Ovary (tissue), 10 donors: ENCODE measurements at regions of chr16 and their contacts with region 1.

Region 1: DNA sequence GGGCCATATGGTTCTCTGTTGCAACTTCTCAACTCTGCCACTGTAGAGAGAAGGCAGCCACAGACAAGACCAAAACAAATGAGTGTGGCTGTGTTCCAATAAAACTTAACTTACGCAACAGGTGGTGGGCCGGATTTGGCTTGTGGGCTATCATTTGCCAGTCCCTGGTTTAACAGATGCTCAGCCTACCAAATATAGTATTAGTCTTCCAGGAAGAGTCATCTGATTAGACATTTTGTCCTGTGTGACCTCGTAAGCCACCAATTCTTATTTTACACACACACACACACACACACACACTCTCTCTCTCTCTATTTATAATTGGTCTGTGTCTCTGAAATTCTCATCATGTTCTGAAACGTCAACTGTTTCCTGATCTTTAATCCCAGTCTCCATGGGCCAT is 245.9 kb downstream of the XYLT1 start:
- DNase-seq: peak; percentile 58 to 78 (median 62)
- H3K4me3 ChIP-seq: no peak overlapping the region
- H3K27ac ChIP-seq: peak overlapping the region in 1 of 2 donors; percentile 29
- H3K4me1 ChIP-seq: peaks cover 9% of the 10 kb centered on the region
- H3K27me3 ChIP-seq: no peaks in the 10 kb centered on the region
- CTCF ChIP-seq: no peak
- EP300 ChIP-seq: no peak
- POLR2A ChIP-seq: no peak

Region 2: DNA sequence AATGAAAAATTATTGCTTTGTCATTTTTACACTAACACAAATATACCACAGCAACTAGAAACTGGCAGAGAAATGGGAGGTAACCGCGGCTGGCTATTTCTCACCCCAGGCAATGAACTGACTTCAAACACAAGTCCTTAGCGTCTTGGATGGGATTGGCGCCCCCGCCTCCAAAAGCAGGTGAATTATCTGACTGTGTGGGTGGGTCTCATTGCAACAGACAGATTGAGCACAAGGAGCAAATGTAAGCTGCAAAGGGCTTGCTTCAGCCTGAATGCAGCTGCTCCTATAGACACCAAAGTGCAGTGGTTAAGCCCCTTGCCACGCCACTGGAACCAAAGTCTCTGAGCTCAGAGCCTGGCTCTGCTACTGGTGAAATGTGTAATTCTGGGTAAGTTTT is 20.9 kb after region 1 on chr16:
- intact Hi-C with region 1: no loop called
- DNase-seq: no peak
- H3K4me3 ChIP-seq: no peak overlapping the region
- H3K27ac ChIP-seq: no peak overlapping the region
- H3K4me1 ChIP-seq: no peaks in the 10 kb centered on the region
- H3K27me3 ChIP-seq: no peaks in the 10 kb centered on the region
- CTCF ChIP-seq: no peak
- EP300 ChIP-seq: no peak
- POLR2A ChIP-seq: no peak

Region 3: DNA sequence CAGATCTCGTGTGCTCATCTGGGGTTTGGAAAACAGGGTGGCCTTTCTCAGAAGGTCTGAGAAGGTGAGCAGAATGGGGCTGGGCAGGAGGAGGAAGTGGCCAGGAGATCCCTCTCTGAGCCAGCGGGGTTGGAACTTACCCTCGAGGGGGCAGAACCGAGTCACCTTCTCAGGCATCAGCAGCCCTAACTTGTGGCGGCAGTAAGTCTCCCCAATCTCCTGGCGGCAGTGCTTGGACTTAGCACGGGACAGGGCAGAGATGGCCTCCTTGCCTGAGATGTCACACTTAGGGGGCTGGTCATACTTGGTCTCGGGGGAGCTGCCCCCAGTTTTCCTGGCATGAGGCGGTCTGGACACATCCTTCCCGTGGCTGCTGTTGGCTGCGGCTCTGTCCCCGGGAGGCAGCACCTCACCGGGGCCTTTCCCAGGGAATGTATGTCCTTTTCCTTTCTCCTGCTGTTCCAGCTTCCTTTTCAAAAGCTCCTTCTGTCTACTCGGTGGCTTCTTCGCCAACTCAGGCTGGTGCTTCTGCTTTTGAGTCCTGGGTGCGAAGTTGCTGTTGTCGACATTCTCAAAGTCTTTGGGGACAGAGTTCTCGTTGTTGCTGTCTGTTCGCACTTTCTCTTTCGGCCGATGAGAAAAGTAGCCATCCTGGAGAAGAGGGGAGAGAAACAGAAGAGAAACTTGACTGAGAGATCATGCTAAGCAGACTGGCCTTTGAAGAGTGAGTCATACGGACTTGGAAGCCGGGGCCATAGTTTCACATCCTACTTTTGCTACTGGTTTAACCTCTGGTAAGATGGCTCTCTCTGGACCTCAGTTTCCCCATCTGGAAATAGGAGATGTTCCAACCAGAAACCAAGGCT is 34.2 kb after region 1 on chr16:
- intact Hi-C with region 1: loop called in 1 of 4 experiments (anchors 1 kb)
- DNase-seq: no peak
- H3K4me3 ChIP-seq: no peak overlapping the region
- H3K27ac ChIP-seq: no peak overlapping the region
- H3K4me1 ChIP-seq: no peaks in the 10 kb centered on the region
- H3K27me3 ChIP-seq: no peaks in the 10 kb centered on the region
- CTCF ChIP-seq: no peak
- EP300 ChIP-seq: no peak
- POLR2A ChIP-seq: no peak

Region 4: DNA sequence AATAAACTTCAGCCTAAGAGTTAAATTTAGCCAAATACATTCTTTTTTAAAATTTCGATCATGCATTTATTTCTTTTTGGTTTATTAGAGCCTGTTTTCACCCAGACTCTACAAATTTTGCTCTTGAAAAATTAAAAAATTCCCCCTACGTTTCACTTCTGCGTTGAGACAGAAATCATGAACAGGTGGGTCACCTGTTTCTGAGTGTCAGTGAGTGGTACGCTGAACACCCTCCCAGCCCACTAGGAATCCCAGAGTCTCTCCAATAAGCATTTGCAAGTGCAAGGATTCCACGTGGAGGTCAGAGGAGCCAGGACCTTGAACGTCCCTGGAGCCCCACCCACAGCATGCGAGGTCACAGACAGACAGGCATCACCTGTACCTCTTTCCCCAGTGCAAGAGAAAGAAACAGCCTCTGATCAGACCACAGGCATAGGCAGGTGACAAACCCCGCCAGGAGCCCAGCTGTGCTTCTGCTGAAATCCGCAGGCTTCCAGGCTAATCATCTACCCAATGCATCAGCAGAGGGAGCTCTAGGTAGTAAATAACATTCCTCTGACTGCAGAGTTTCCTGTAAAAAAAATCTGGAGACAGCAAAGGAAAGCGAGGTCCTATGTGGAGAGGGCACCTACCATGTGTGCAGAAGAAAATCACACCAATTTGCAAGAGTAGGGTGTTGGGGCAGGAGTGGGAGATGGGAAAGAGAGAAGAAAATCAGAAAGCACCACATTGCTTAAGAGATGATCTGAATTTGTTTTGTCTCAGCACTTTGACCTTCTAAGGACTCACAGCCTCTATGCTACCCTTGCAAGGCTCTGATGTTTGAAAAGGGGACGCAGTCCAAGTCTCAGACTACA is 251.8 kb after region 1 on chr16:
- intact Hi-C with region 1: loop called in 1 of 4 experiments (anchors 10 kb)
- DNase-seq: peak in 3 of 5 donors; percentile 20 to 40 (median 30)
- H3K4me3 ChIP-seq: no peak overlapping the region
- H3K27ac ChIP-seq: no peak overlapping the region
- H3K4me1 ChIP-seq: no peaks in the 10 kb centered on the region
- H3K27me3 ChIP-seq: no peaks in the 10 kb centered on the region
- CTCF ChIP-seq: peak in 1 of 3 donors; percentile 25
- EP300 ChIP-seq: no peak
- POLR2A ChIP-seq: no peak